Heart right ventricle (tissue), 16 donors: ENCODE measurements at regions of chr2 and their contacts with region 1.

Region 1: GRCh38 chr2:163657281-163657656 is 78.5 kb downstream of the FIGN start:
- DNase-seq: no peak
- ATAC-seq: no peak
- H3K4me3 ChIP-seq: no peak overlapping the region
- H3K27ac ChIP-seq: peak overlapping the region in 7 of 10 donors; percentile 5 to 76 (median 71)
- H3K4me1 ChIP-seq: peaks cover 0 to 46% (median 12%) of the 10 kb centered on the region in 9 donors
- H3K27me3 ChIP-seq: no peaks in the 10 kb centered on the region
- CTCF ChIP-seq: no peak

Region 2: DNA sequence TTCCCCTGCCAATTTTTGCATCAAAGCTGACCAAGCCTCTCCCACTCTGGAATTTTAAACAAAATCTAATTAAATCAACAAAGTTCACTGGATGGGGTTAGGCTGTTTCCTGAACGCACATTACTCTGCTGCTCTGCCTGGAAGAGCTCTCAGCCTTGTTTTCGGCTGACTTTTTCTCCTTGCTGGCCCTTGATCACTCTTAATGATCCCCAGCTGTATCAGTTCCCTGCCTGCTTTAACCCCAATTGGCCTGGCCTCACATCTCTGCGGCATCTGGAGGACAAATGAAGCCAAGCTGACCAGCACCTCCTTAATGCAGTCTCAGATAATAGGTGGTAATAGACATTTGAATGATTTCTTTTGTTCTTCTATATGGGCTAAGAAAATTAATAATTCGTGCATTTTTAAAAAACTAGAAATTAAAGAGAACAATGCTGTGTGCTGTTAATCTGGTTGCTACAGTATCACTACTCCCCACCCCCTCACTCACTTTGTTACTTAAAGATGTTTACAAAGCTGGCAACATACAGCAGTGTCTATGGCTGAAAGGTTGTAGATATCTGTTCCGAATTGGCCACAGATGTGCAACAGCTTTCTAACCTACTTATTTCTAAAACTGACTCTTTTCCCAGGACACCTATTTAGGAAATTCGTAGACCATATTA is 403.5 kb before region 1 on chr2:
- intact Hi-C with region 1: no loop called
- DNase-seq: no peak
- ATAC-seq: no peak
- H3K4me3 ChIP-seq: no peak overlapping the region
- H3K27ac ChIP-seq: no peak overlapping the region
- H3K4me1 ChIP-seq: no peaks in the 10 kb centered on the region
- H3K27me3 ChIP-seq: no peaks in the 10 kb centered on the region
- CTCF ChIP-seq: no peak

Region 3: DNA sequence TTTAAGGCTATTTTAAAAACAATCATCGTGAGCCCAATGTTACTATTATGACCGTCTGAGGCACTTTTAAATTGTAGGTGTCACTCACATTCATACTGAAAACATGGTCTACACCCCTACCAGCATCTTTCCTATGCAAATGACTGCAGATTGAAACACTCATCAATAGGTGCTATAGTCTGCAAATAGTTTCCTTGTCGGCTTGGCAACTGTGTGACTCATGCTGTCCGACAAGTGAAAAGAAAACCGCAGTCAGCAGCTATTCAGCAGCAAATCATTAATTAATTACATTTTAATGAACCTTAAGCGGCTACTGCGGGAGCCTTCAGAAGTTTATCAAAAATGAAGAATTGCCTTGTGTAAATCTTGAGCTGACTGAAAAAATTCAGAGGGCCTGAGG is 55.9 kb before region 1 on chr2:
- intact Hi-C with region 1: loop called in 1 of 10 experiments (anchors 5 kb)
- DNase-seq: no peak
- ATAC-seq: no peak
- H3K4me3 ChIP-seq: no peak overlapping the region
- H3K27ac ChIP-seq: no peak overlapping the region
- H3K4me1 ChIP-seq: peaks cover 0 to 28% (median 15%) of the 10 kb centered on the region in 9 donors
- H3K27me3 ChIP-seq: no peaks in the 10 kb centered on the region
- CTCF ChIP-seq: no peak

Region 4: GRCh38 chr2:163717993-163718680 is 60.9 kb after region 1 on chr2:
- intact Hi-C with region 1: loop called in 1 of 10 experiments (anchors 10 kb)
- DNase-seq: no peak
- ATAC-seq: peak; percentile 56 to 87 (median 76)
- H3K4me3 ChIP-seq: peak overlapping the region in 2 of 10 donors; percentile 13 to 14
- H3K27ac ChIP-seq: peak overlapping the region in 8 of 10 donors; percentile 6 to 54 (median 32)
- H3K4me1 ChIP-seq: peaks cover 0 to 64% (median 17%) of the 10 kb centered on the region in 9 donors
- H3K27me3 ChIP-seq: no peaks in the 10 kb centered on the region
- CTCF ChIP-seq: no peak

Region 5: DNA sequence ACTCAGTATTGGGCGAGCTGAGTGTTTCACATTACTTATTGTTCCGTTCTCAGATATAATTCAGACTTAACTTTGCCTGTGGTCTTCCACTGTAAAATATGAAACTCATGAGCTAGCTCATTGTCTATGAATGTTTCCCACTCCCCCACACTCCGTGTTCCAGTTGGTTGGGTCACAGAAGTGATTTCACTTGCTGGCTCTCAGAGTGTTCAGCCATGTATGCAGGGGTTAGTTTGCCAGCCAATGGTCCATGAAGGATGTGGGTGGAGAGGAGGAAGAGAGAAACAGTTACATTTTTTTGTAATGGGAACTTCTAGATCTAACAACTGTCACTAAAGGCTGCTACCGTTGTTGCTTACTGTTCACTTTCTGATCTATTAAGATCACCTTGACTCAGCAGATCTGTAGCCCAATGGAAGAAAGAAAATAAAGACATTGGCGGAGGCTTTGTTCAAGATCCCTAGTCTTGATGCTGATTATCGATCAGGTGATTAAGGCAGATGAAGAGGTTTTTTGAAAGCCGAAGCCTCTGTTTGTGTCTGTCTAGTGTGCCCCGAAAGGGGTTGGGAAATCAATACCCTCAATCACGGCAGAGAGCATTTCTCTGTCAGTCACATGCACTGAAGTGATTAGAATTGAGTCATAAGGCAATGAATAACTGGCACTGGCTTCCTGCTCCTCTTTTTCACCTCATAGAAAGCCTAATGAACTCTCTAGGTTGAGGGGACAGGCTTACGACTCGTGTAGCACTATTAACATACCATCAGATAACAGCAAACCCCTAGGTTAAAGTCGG is 358.3 kb after region 1 on chr2:
- intact Hi-C with region 1: no loop called
- DNase-seq: peak in 1 of 2 donors; percentile 16
- ATAC-seq: peak in 7 of 8 donors; percentile 51 to 92 (median 86)
- H3K4me3 ChIP-seq: no peak overlapping the region
- H3K27ac ChIP-seq: peak overlapping the region in 3 of 10 donors; percentile 10 to 49 (median 29)
- H3K4me1 ChIP-seq: no peaks in the 10 kb centered on the region
- H3K27me3 ChIP-seq: no peaks in the 10 kb centered on the region
- CTCF ChIP-seq: no peak